AG04450 (cell line): ENCODE measurements at regions of chr9 and their contacts with region 1.

Region 1: GRCh38 chr9:22483528-22484070 is 37.0 kb downstream of the DMRTA1 start:
- DNase-seq: no peak
- H3K4me3 ChIP-seq: no peak overlapping the region
- H3K27ac ChIP-seq: no peak overlapping the region
- H3K27me3 ChIP-seq: no peaks in the 10 kb centered on the region
- CTCF ChIP-seq: no peak

Region 2: DNA sequence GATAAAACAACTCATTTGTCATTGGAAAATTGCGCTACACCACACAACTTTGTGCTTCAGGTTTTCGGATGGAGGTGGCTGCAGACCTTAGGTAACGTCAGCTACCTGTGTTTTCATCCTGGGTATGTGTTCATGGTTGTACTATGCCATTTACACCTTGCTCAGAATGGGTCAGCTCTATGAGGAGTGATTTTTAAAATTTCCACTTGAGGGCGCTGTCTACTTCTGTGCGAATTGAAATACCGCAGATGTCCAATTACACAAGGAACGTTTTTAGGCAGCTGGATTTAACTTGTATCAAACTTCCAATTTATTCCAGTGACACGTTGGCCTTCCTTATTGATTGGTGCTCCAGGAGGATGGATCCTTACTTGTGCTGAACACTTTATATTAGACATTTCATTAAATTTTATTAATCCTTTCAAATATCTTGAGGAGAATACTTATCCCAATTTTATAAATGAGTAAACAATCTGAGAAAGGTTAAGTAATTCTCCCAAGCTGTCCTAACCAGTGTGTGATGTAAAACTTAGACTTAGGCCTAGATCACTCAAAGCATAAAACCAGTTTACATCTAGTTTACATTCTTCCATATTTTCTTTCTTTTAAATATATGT is 13.6 kb before region 1 on chr9:
- CTCF ChIA-PET with region 1: interaction called, 10 read pairs
- POLR2A ChIA-PET with region 1: no interaction called
- DNase-seq: no peak
- H3K4me3 ChIP-seq: no peak overlapping the region
- H3K27ac ChIP-seq: no peak overlapping the region
- H3K27me3 ChIP-seq: no peaks in the 10 kb centered on the region
- CTCF ChIP-seq: peak; percentile 71

Region 3: DNA sequence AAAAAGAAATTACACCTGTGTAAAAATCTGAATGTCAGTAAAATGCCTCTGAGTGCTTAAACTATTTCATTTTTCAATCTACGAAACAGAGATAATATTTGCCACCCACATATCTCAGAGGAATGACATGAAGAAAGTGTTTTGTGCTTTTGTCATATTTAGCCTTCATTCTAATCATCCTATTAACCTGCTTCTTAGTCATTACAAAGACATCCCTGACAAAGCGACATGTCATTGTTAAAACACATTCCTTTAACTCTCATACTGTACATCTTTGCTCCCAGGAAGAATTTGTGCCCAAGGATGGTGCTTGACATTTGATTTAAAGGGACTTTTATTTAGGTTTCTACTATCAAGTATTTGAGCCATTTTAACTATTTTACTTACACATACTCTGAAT is 238.9 kb after region 1 on chr9:
- CTCF ChIA-PET with region 1: no interaction called
- POLR2A ChIA-PET with region 1: no interaction called
- DNase-seq: no peak
- H3K4me3 ChIP-seq: no peak overlapping the region
- H3K27ac ChIP-seq: no peak overlapping the region
- H3K27me3 ChIP-seq: no peaks in the 10 kb centered on the region
- CTCF ChIP-seq: no peak